ENCODE measurements at regions of chr7 and their contacts with region 1.

Region 1: DNA sequence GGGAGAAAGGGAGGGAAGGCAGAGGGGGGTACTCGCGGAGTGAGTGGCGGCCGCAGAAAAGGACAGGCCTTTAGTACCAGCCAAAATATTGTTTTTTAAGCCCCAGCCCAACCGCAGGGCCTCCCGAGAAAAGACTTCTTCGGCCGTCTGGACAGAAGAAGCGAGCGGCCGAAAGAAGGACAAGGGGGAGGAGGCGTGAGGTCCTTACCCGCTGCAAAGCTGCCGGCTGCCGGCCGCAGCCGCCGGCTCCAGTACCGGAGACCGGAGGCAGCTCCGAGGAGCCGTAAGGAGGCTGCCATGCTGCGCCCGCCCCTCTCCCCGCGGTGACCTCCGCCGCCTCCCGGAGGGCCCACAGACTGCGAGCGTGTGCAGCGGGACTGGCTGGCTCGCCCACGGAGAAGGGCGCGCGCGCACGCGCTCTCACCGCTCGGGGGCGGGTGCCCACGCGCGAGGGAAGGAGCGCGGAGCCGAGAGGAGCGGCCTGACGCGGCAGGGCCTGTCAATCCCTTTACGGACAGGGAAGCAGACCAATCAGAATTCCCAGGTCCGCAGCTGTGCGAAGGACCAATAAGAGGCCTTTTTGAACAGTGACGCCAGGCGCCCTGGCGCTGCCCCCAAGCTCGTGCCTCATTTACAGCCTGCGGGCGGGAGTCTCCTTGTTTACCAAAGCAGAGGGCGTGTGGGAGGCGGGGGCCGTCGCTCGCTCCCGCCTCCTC is at the start of gene HIBADH:
- DNase-seq: peak; percentile 94 to 99 (median 98)
- H3K4me3 ChIP-seq: peak within 1 kb of the TSS; percentile 58 to 99 (median 88)
- H3K27ac ChIP-seq: peak within 1 kb of the TSS; percentile 71 to 98 (median 91)
- H3K27me3 ChIP-seq: no peaks in the 10 kb centered on the region
- CTCF ChIP-seq: peak in 44 of 56 donors; percentile 8 to 62 (median 38)
- total RNA-seq, gene HIBADH: 15.1 to 29.9 (median 20.1) TPM

Region 2: DNA sequence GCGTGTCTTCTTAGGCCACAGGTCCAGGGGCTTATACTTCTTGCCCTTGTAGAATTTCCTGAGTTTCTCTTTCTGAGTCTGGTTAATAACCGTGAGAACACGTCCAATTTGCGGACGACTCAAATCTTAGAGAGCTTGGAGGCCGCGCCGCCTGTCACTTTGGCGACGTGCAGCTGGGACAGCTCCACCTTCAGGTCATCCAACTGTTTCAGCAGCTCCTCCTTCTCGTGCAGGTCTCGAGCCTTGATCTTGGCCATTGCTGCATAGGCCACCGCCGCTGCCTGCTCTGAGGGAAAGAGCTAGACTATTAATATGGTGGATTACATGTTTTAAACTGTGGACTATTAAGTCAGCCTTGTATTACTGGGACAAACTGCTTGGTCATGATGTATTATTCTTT is 393.2 kb before region 1 on chr7:
- intact Hi-C with region 1: no loop called
- DNase-seq: no peak
- H3K4me3 ChIP-seq: no peak overlapping the region
- H3K27ac ChIP-seq: no peak overlapping the region
- H3K27me3 ChIP-seq: peaks cover 0 to 22% (median 0%) of the 10 kb centered on the region in 45 donors
- CTCF ChIP-seq: no peak

Region 3: DNA sequence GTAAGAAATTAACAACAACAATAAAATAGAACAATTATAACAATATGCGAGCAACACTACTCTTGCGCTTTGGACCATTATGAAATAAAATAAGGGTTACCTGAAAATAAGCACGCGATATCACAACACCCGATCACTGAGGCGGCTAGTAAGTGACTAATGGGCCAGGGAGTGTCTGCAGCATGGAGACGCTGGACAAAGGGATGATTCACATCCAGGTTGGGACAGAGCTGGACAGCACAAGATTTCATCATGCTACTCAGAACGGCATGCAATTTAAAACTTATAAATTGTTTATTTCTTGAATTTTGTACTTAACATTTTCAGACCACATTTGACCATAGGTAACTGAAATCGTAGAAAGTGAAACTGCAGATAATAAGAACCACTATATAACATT is 15.6 kb before region 1 on chr7:
- intact Hi-C with region 1: no loop called
- DNase-seq: no peak
- H3K4me3 ChIP-seq: no peak overlapping the region
- H3K27ac ChIP-seq: no peak overlapping the region
- H3K27me3 ChIP-seq: no peaks in the 10 kb centered on the region
- CTCF ChIP-seq: no peak

Region 4: GRCh38 chr7:27714831-27715444 is 52.3 kb after region 1 on chr7:
- intact Hi-C with region 1: no loop called
- DNase-seq: no peak
- H3K4me3 ChIP-seq: no peak overlapping the region
- H3K27ac ChIP-seq: no peak overlapping the region
- H3K27me3 ChIP-seq: no peaks in the 10 kb centered on the region
- CTCF ChIP-seq: no peak

Region 5: GRCh38 chr7:27739909-27740448 is 77.3 kb after region 1 on chr7 and contains the start of gene TAX1BP1:
- intact Hi-C with region 1: loop called (anchors 2 kb)
- DNase-seq: peak; percentile 88 to 98 (median 96)
- H3K4me3 ChIP-seq: peak within 1 kb of the TSS; percentile 67 to 99 (median 93)
- H3K27ac ChIP-seq: peak within 1 kb of the TSS; percentile 31 to 99 (median 93)
- H3K27me3 ChIP-seq: no peaks in the 10 kb centered on the region
- CTCF ChIP-seq: peak in 23 of 56 donors; percentile 3 to 52 (median 25)
- total RNA-seq, gene TAX1BP1: 83.6 to 164 (median 133) TPM

Region 6: GRCh38 chr7:27860800-27861199 is 198.2 kb after region 1 on chr7:
- intact Hi-C with region 1: no loop called
- DNase-seq: no peak
- H3K4me3 ChIP-seq: no peak overlapping the region
- H3K27ac ChIP-seq: no peak overlapping the region
- H3K27me3 ChIP-seq: no peaks in the 10 kb centered on the region
- CTCF ChIP-seq: no peak

Region 7: GRCh38 chr7:27933671-27934565 is 271.3 kb after region 1 on chr7:
- intact Hi-C with region 1: loop called in 1 of 2 experiments (anchors 10 kb)
- DNase-seq: peak in 1 of 10 donors; percentile 69
- H3K4me3 ChIP-seq: no peak overlapping the region
- H3K27ac ChIP-seq: no peak overlapping the region
- H3K27me3 ChIP-seq: no peaks in the 10 kb centered on the region
- CTCF ChIP-seq: peak in 52 of 56 donors; percentile 13 to 73 (median 47)